ENCODE measurements at regions of chr9 and their contacts with region 1.

Region 1: GRCh38 chr9:108565651-108566378 is 290.0 kb downstream of the ACTL7B start:
- DNase-seq: no peak
- H3K4me3 ChIP-seq: no peak overlapping the region
- H3K27ac ChIP-seq: peak overlapping the region; percentile 52 to 78 (median 62)
- H3K4me1 ChIP-seq: peaks cover 6 to 80% (median 14%) of the 10 kb centered on the region in 3 donors
- H3K27me3 ChIP-seq: no peaks in the 10 kb centered on the region
- CTCF ChIP-seq: peak; percentile 61 to 96 (median 89)
- POLR2A ChIP-seq: no peak

Region 2: GRCh38 chr9:107465467-107466451 is 1100.1 kb before region 1 on chr9:
- intact Hi-C with region 1: loop called (anchors 5 kb)
- DNase-seq: no peak
- H3K4me3 ChIP-seq: peak overlapping the region; percentile 65 to 77 (median 70)
- H3K27ac ChIP-seq: peak overlapping the region; percentile 67 to 86 (median 80)
- H3K4me1 ChIP-seq: peaks cover 5 to 18% (median 7%) of the 10 kb centered on the region in 3 donors
- H3K27me3 ChIP-seq: peaks cover 0 to 13% (median 0%) of the 10 kb centered on the region in 4 donors
- CTCF ChIP-seq: peak; percentile 49 to 95 (median 86)
- POLR2A ChIP-seq: no peak

Region 3: GRCh38 chr9:108282872-108283271 is 282.9 kb before region 1 on chr9:
- intact Hi-C with region 1: loop called (anchors 10 kb)
- DNase-seq: no peak
- H3K4me3 ChIP-seq: no peak overlapping the region
- H3K27ac ChIP-seq: peak overlapping the region in 2 of 4 donors; percentile 14 to 30
- H3K4me1 ChIP-seq: peaks cover 0 to 29% (median 5%) of the 10 kb centered on the region in 3 donors
- H3K27me3 ChIP-seq: no peaks in the 10 kb centered on the region
- CTCF ChIP-seq: peak in 3 of 6 experiments; percentile 27 to 60 (median 38)
- POLR2A ChIP-seq: no peak

Region 4: GRCh38 chr9:108322326-108323098 is 243.3 kb before region 1 on chr9:
- intact Hi-C with region 1: no loop called
- DNase-seq: no peak
- H3K4me3 ChIP-seq: no peak overlapping the region
- H3K27ac ChIP-seq: no peak overlapping the region
- H3K4me1 ChIP-seq: no peaks in the 10 kb centered on the region
- H3K27me3 ChIP-seq: no peaks in the 10 kb centered on the region
- CTCF ChIP-seq: no peak
- POLR2A ChIP-seq: no peak

Measured in esophagus squamous epithelium (tissue), 5 donors.